IMR-90 (cell line): ENCODE measurements at regions of chr4 and their contacts with region 1.

Region 1: GRCh38 chr4:87390891-87391575 is at the start of gene HSD17B11:
- DNase-seq: peak; percentile 93
- ATAC-seq: peak; percentile 100
- H3K4me3 ChIP-seq: peak within 1 kb of the TSS; percentile 66
- H3K27ac ChIP-seq: peak within 1 kb of the TSS; percentile 82
- H3K4me1 ChIP-seq: 0 out of 2 replicates have a peak, but pooled peaks cover 2% of the 10 kb centered on the region
- H3K27me3 ChIP-seq: no peaks in the 10 kb centered on the region
- CTCF ChIP-seq: peak; percentile 7; the same call in 1 of the 2 replicates
- POLR2A ChIP-seq: no peak
- RAD21 ChIP-seq: no peak
- total RNA-seq, gene HSD17B11: 11.3 and 28.6 TPM in 2 replicates

Region 2: GRCh38 chr4:87422104-87423052 is 31.3 kb after region 1 on chr4 and contains the start of gene NUDT9:
- CTCF ChIA-PET with region 1: interaction called, 3 read pairs
- POLR2A ChIA-PET with region 1: interaction called, 8 read pairs
- dilution Hi-C with region 1: no loop called
- in situ Hi-C with region 1: no loop called
- intact Hi-C with region 1: loop called (anchors 2 kb)
- DNase-seq: peak; percentile 96
- ATAC-seq: peak; percentile 96
- H3K4me3 ChIP-seq: peak within 1 kb of the TSS; percentile 64
- H3K27ac ChIP-seq: peak within 1 kb of the TSS; percentile 78
- H3K4me1 ChIP-seq: peaks cover 4% of the 10 kb centered on the region
- H3K27me3 ChIP-seq: no peaks in the 10 kb centered on the region
- CTCF ChIP-seq: no peak
- POLR2A ChIP-seq: peak; percentile 74
- RAD21 ChIP-seq: 0 out of 2 replicates have a peak, but pooled peaks have one; percentile 1
- total RNA-seq, gene NUDT9: 10.0 and 14.2 TPM in 2 replicates